CD14-positive monocyte (primary cell): ENCODE measurements at regions of chr14 and their contacts with region 1.

Region 1: GRCh38 chr14:89618811-89619551 is 201.9 kb upstream of the FOXN3 start:
- DNase-seq: peak; percentile 50 to 54 (median 52)
- H3K4me3 ChIP-seq: peak overlapping the region; percentile 88 to 100 (median 96)
- H3K4me3 Mint-ChIP-seq: peak overlapping the region; percentile 88 to 96
- H3K27ac ChIP-seq: peak overlapping the region in 1 of 2 donors; percentile 90
- H3K27ac Mint-ChIP-seq: peak overlapping the region; percentile 81 to 93 (median 88)
- H3K4me1 ChIP-seq: peaks cover 29 to 47% of the 10 kb centered on the region in 2 donors
- H3K4me1 Mint-ChIP-seq: peaks cover 57% of the 10 kb centered on the region
- H3K27me3 ChIP-seq: no peaks in the 10 kb centered on the region
- H3K27me3 Mint-ChIP-seq: peaks cover 1 to 6% (median 2%) of the 10 kb centered on the region in 3 donors
- CTCF ChIP-seq: no peak

Region 2: DNA sequence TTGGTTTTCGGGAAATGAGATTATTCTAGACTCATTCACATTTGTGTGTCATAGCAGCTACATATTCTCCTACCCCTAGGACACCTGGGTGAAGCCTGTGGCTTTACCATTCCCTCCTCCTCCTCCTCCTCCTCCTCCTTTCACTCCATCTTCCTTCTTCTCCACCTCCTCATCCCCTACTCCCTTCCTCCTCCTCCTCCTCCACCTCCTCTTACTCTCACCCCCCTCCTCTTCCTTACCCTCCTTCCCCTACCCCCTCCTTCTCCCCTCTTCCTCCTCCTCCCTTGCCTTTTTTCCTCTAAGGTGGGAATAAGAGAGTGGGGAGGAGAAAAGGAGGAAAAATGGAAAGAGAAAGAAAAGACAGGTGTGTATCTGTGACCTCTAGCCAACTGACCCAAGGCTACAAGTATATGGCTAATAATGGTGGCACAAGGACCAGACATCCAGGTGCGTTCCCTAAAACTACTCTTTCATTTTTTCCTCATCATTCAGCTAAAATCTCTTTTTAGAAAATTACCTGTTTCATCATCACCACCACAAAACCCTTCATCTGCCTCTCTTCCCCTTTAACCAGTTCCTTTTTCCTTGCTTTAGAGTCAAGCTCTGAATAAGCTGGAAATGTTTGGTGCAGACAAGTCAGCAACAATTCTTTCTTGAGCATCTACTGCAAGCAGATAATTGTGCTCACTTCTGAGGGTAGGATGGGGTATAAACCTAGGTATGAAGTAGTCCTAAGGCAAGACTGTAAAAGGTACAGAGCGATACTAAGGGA is 52.2 kb before region 1 on chr14:
- intact Hi-C with region 1: loop called in 1 of 2 experiments (anchors 5 kb)
- DNase-seq: peak; percentile 35 to 60 (median 59)
- H3K4me3 ChIP-seq: peak overlapping the region in 1 of 3 experiments; percentile 42
- H3K4me3 Mint-ChIP-seq: peak overlapping the region in 1 of 2 donors; percentile 4
- H3K27ac ChIP-seq: peak overlapping the region in 1 of 2 donors; percentile 51
- H3K27ac Mint-ChIP-seq: peak overlapping the region in 6 of 7 donors; percentile 18 to 80 (median 66)
- H3K4me1 ChIP-seq: peaks cover 48 to 57% of the 10 kb centered on the region in 2 donors
- H3K4me1 Mint-ChIP-seq: peaks cover 56% of the 10 kb centered on the region
- H3K27me3 ChIP-seq: no peaks in the 10 kb centered on the region
- H3K27me3 Mint-ChIP-seq: peaks cover 0 to 4% (median 0%) of the 10 kb centered on the region in 3 donors
- CTCF ChIP-seq: no peak

Region 3: DNA sequence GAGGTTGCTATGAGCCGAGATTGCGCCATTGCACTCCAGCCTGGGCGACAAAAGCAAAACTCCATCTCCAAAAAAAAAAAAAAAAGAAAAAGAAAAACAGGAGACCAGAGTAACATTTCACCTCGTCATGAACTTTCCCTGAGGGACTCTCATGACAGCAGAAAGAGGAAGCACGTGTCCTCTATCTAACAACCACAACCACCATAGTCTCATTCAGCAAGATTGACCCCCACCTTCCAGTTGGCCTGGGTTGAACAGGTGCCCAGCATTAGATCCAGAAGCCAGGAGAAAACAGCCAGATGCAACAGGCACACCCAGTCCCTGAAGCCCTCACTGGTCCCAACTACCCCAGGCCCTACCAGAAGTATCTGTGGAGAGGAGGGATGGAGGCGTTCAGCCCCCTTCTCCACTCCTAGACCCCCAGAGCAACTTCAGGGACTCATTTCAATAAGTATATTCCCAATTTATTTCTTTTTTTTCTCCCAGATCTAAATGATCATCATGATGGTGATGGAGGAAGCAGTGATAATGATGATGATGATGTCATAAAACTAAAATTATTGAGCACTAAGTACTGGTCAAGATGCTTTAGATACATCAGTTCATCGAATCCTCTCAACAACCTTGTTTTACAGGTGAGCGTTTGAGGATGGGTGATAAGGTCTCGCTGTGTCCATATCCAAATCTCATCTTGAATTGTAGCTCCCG is 100.5 kb after region 1 on chr14:
- intact Hi-C with region 1: loop called in 1 of 2 experiments (anchors 5 kb)
- DNase-seq: peak; percentile 77 to 90 (median 77)
- H3K4me3 ChIP-seq: peak overlapping the region in 1 of 3 experiments; percentile 53
- H3K4me3 Mint-ChIP-seq: peak overlapping the region in 1 of 2 donors; percentile 40
- H3K27ac ChIP-seq: peak overlapping the region; percentile 85 to 96
- H3K27ac Mint-ChIP-seq: peak overlapping the region; percentile 91 to 99 (median 98)
- H3K4me1 ChIP-seq: peaks cover 63 to 64% of the 10 kb centered on the region in 2 donors
- H3K4me1 Mint-ChIP-seq: peaks cover 68% of the 10 kb centered on the region
- H3K27me3 ChIP-seq: no peaks in the 10 kb centered on the region
- H3K27me3 Mint-ChIP-seq: peaks cover 0 to 6% (median 3%) of the 10 kb centered on the region in 3 donors
- CTCF ChIP-seq: no peak

Region 4: GRCh38 chr14:89915114-89915878 is 296.3 kb after region 1 on chr14:
- intact Hi-C with region 1: loop called in 1 of 2 experiments (anchors 10 kb)
- DNase-seq: peak; percentile 47 to 76 (median 57)
- H3K4me3 ChIP-seq: no peak overlapping the region
- H3K4me3 Mint-ChIP-seq: no peak overlapping the region
- H3K27ac ChIP-seq: no peak overlapping the region
- H3K27ac Mint-ChIP-seq: peak overlapping the region in 1 of 7 donors; percentile 44
- H3K4me1 ChIP-seq: peaks cover 5 to 15% of the 10 kb centered on the region in 2 donors
- H3K4me1 Mint-ChIP-seq: peaks cover 12% of the 10 kb centered on the region
- H3K27me3 ChIP-seq: no peaks in the 10 kb centered on the region
- H3K27me3 Mint-ChIP-seq: peaks cover 2 to 5% (median 2%) of the 10 kb centered on the region in 3 donors
- CTCF ChIP-seq: peak; percentile 94

Region 5: DNA sequence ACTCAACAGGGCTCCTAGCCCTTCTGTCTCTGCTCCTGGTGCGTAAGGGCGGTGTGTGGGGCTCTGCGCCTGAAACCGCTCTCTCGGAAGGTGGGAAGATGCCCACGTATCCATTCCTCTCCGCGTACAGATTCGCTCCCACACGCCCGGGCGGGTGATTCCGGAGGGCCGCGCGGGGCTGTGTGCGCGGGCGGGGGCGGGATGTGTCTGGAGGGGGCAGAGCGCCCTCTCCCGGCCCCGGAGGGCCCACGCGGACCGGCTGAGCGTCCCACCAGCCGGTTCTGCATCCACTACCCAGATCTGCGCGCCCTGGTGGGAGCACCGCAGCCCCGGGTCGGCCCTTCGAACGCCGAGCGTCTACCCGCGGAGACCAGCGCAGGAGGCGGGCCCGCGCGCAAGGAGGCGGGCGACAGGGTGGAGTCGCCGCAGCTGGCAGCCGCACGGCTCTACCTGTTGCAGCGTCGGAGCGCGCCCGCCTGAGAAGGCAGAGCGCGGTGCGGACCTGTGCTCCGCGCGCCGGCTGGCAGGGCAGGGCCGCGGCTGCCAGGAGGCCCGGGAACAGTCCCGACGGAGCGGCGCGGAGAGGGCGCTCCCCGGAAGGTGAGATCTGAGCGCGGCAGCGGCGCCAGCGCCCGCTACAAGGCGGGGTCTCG is 441.5 kb after region 1 on chr14:
- intact Hi-C with region 1: no loop called
- DNase-seq: peak; percentile 19 to 44 (median 31)
- H3K4me3 ChIP-seq: peak overlapping the region; percentile 43 to 84 (median 48)
- H3K4me3 Mint-ChIP-seq: peak overlapping the region; percentile 96 to 97
- H3K27ac ChIP-seq: no peak overlapping the region
- H3K27ac Mint-ChIP-seq: no peak overlapping the region
- H3K4me1 ChIP-seq: peaks cover 36 to 58% of the 10 kb centered on the region in 2 donors
- H3K4me1 Mint-ChIP-seq: peaks cover 48% of the 10 kb centered on the region
- H3K27me3 ChIP-seq: peaks cover 37 to 60% of the 10 kb centered on the region in 2 donors
- H3K27me3 Mint-ChIP-seq: peaks cover 47 to 73% (median 65%) of the 10 kb centered on the region in 3 donors
- CTCF ChIP-seq: peak; percentile 69